Esophagus muscularis mucosa (tissue), 4 donors: ENCODE measurements at regions of chr18 and their contacts with region 1.

Region 1: DNA sequence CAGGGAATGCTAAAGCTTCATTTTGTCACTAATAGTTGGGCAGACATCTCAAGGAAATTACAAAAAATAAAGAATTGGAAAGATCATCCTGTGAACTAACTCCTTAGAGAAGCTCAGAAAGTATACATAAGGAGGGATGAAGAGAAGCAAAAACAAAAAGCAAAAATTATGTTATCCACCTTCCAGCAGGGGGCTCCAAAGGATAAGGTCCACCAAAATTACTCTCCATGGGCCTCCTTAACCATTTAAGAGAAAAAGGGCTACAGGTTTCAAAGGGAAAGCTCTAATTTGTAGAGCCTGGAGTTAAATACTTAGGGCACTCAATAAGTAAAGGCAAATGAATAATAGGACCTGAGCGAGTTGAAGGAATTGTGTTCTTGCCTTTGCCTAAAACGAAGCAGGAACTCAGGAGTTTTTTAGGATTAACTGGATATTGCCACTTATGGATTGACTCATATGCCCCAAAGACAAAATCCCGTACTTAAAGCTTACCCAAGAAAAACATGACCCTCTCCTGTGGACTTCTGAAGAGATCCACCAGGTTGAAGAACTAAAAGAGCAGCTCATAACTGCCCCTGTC is 1167.9 kb downstream of the DSC3 start:
- DNase-seq: no peak
- H3K4me3 ChIP-seq: no peak overlapping the region
- H3K27ac ChIP-seq: no peak overlapping the region
- H3K4me1 ChIP-seq: no peaks in the 10 kb centered on the region
- H3K27me3 ChIP-seq: no peaks in the 10 kb centered on the region
- CTCF ChIP-seq: peak; percentile 16 to 53 (median 35)
- EP300 ChIP-seq: no peak
- POLR2A ChIP-seq: no peak

Region 2: GRCh38 chr18:29823671-29824070 is 50.9 kb before region 1 on chr18:
- intact Hi-C with region 1: no loop called
- DNase-seq: no peak
- H3K4me3 ChIP-seq: no peak overlapping the region
- H3K27ac ChIP-seq: no peak overlapping the region
- H3K4me1 ChIP-seq: no peaks in the 10 kb centered on the region
- H3K27me3 ChIP-seq: no peaks in the 10 kb centered on the region
- CTCF ChIP-seq: no peak
- EP300 ChIP-seq: no peak
- POLR2A ChIP-seq: no peak

Region 3: GRCh38 chr18:30889519-30890301 is 1015.1 kb after region 1 on chr18:
- intact Hi-C with region 1: loop called (anchors 10 kb)
- DNase-seq: no peak
- H3K4me3 ChIP-seq: no peak overlapping the region
- H3K27ac ChIP-seq: no peak overlapping the region
- H3K4me1 ChIP-seq: no peaks in the 10 kb centered on the region
- H3K27me3 ChIP-seq: no peaks in the 10 kb centered on the region
- CTCF ChIP-seq: peak; percentile 33 to 52 (median 34)
- EP300 ChIP-seq: no peak
- POLR2A ChIP-seq: no peak

Region 4: GRCh38 chr18:30971338-30971956 is 1096.8 kb after region 1 on chr18:
- intact Hi-C with region 1: loop called (anchors 2 kb)
- DNase-seq: no peak
- H3K4me3 ChIP-seq: no peak overlapping the region
- H3K27ac ChIP-seq: no peak overlapping the region
- H3K4me1 ChIP-seq: no peaks in the 10 kb centered on the region
- H3K27me3 ChIP-seq: no peaks in the 10 kb centered on the region
- CTCF ChIP-seq: peak; percentile 49 to 63 (median 60)
- EP300 ChIP-seq: no peak
- POLR2A ChIP-seq: no peak